ENCODE measurements at regions of chr15 and their contacts with region 1.

Region 1: GRCh38 chr15:77607111-77607893 is 25.4 kb downstream of the LINGO1 start:
- DNase-seq: no peak
- ATAC-seq: peak; percentile 16 to 46; a peak in 3 of 6 replicates
- H3K4me3 ChIP-seq: no peak overlapping the region
- H3K27ac ChIP-seq: no peak overlapping the region
- H3K4me1 ChIP-seq: peaks cover 8% of the 10 kb centered on the region; the same call in 2 of the 3 replicates
- CTCF ChIP-seq: no peak
- EP300 ChIP-seq: no peak
- POLR2A ChIP-seq: no peak
- RAD21 ChIP-seq: no peak

Region 2: GRCh38 chr15:77617476-77618230 is 10.4 kb after region 1 on chr15:
- CTCF ChIA-PET with region 1: interaction called, 55 read pairs
- POLR2A ChIA-PET with region 1: no interaction called
- DNase-seq: peak; percentile 60 to 69
- ATAC-seq: peak; percentile 47 to 84; a peak in 4 of 6 replicates
- H3K4me3 ChIP-seq: no peak overlapping the region
- H3K27ac ChIP-seq: no peak overlapping the region
- H3K4me1 ChIP-seq: no peaks in the 10 kb centered on the region; the same call in 2 of the 3 replicates
- CTCF ChIP-seq: peak; percentile 52
- EP300 ChIP-seq: no peak
- POLR2A ChIP-seq: no peak
- RAD21 ChIP-seq: no peak

Region 3: GRCh38 chr15:77722759-77723460 is 115.6 kb after region 1 on chr15:
- CTCF ChIA-PET with region 1: no interaction called
- POLR2A ChIA-PET with region 1: no interaction called
- DNase-seq: no peak
- ATAC-seq: peak in 1 of 2 experiments; percentile 36; a peak in 3 of 6 replicates
- H3K4me3 ChIP-seq: no peak overlapping the region
- H3K27ac ChIP-seq: no peak overlapping the region
- H3K4me1 ChIP-seq: no peaks in the 10 kb centered on the region
- CTCF ChIP-seq: no peak
- EP300 ChIP-seq: no peak
- POLR2A ChIP-seq: no peak
- RAD21 ChIP-seq: no peak